Posterior vena cava (tissue), 2 donors: ENCODE measurements at regions of chr16 and their contacts with region 1.

Region 1: GRCh38 chr16:70604407-70605283 is 41.7 kb upstream of the IL34 start:
- DNase-seq: no peak

Region 2: GRCh38 chr16:69049603-69050375 is 1554.9 kb before region 1 on chr16:
- intact Hi-C with region 1: loop called in 1 of 2 experiments (anchors 5 kb)
- DNase-seq: no peak

Region 3: GRCh38 chr16:70289229-70290098 is 315.2 kb before region 1 on chr16 and contains the start of gene AARS1:
- intact Hi-C with region 1: no loop called
- DNase-seq: peak; percentile 98
- total RNA-seq, gene AARS1: 77.2 to 86.3 TPM